ENCODE measurements at regions of chr1 and their contacts with region 1.

Region 1: DNA sequence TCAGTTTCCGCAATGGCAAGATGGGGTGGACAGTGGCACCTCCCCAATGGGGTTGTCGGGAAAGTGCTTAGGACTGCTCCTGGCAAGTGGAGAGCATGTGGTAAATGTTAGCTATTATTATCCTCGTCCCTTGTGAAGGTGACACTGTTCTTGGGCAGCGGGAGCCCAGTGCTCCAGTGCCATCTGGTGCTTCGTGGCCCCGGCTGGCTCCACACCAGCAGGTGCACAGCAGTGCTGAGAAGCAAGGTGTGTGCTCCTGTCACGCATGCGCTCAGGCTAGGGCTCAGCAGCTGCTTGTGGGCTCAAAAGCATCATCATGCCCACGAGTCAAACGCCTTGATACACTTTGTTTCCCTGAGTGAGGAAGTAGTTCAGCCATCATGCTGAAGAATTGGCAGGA is 24.9 kb upstream of the KCNC4 start:
- DNase-seq: no peak
- ATAC-seq: no peak
- H3K4me3 ChIP-seq: no peak overlapping the region
- H3K4me3 Mint-ChIP-seq: no peak overlapping the region
- H3K27ac ChIP-seq: no peak overlapping the region
- H3K27ac Mint-ChIP-seq: no peak overlapping the region
- H3K4me1 ChIP-seq: no peaks in the 10 kb centered on the region
- H3K4me1 Mint-ChIP-seq: no peaks in the 10 kb centered on the region
- H3K27me3 ChIP-seq: peaks cover 0 to 37% of the 10 kb centered on the region in 2 experiments
- H3K27me3 Mint-ChIP-seq: peaks cover 4 to 11% of the 10 kb centered on the region in 2 donors

Region 2: GRCh38 chr1:111778541-111779051 is 1593.4 kb after region 1 on chr1:
- CTCF ChIA-PET with region 1: interaction called in 1 of 2 experiments, 10 read pairs
- POLR2A ChIA-PET with region 1: no interaction called
- DNase-seq: no peak
- ATAC-seq: no peak
- H3K4me3 ChIP-seq: no peak overlapping the region
- H3K4me3 Mint-ChIP-seq: no peak overlapping the region
- H3K27ac ChIP-seq: no peak overlapping the region
- H3K27ac Mint-ChIP-seq: no peak overlapping the region
- H3K4me1 ChIP-seq: no peaks in the 10 kb centered on the region
- H3K4me1 Mint-ChIP-seq: no peaks in the 10 kb centered on the region
- H3K27me3 ChIP-seq: no peaks in the 10 kb centered on the region
- H3K27me3 Mint-ChIP-seq: peaks cover 4 to 5% of the 10 kb centered on the region in 2 donors